ENCODE measurements at regions of chr2 and their contacts with region 1.

Region 1: GRCh38 chr2:117814417-117815264 is at the start of gene DDX18:
- DNase-seq: peak; percentile 96
- H3K4me3 Mint-ChIP-seq: peak within 1 kb of the TSS; percentile 90
- H3K27ac Mint-ChIP-seq: peak within 1 kb of the TSS; percentile 92
- H3K4me1 Mint-ChIP-seq: peaks cover 21% of the 10 kb centered on the region
- H3K27me3 Mint-ChIP-seq: no peaks in the 10 kb centered on the region
- total RNA-seq, gene DDX18: 128 and 131 TPM in 2 replicates

Region 2: GRCh38 chr2:117936871-117937428 is 122.3 kb after region 1 on chr2:
- intact Hi-C with region 1: loop called (anchors 10 kb)
- DNase-seq: no peak
- H3K4me3 Mint-ChIP-seq: no peak overlapping the region
- H3K27ac Mint-ChIP-seq: no peak overlapping the region
- H3K4me1 Mint-ChIP-seq: no peaks in the 10 kb centered on the region
- H3K27me3 Mint-ChIP-seq: no peaks in the 10 kb centered on the region

Region 3: GRCh38 chr2:118186110-118186857 is 371.6 kb after region 1 on chr2:
- intact Hi-C with region 1: loop called (anchors 5 kb)
- DNase-seq: peak; percentile 83
- H3K4me3 Mint-ChIP-seq: peak overlapping the region; percentile 93
- H3K27ac Mint-ChIP-seq: peak overlapping the region; percentile 94
- H3K4me1 Mint-ChIP-seq: peaks cover 25% of the 10 kb centered on the region
- H3K27me3 Mint-ChIP-seq: peaks cover 5% of the 10 kb centered on the region